Naive thymus-derived CD4-positive, alpha-beta T cell (primary cell): ENCODE measurements at regions of chr12 and their contacts with region 1.

Region 1: GRCh38 chr12:7018350-7019042 is at the start of gene LPCAT3:
- DNase-seq: peak; percentile 93 to 99 (median 98)
- ATAC-seq: peak; percentile 97
- H3K4me3 ChIP-seq: peak within 1 kb of the TSS; percentile 95
- H3K4me3 Mint-ChIP-seq: peak within 1 kb of the TSS; percentile 84 to 100 (median 94)
- H3K27ac ChIP-seq: peak within 1 kb of the TSS; percentile 89
- H3K27ac Mint-ChIP-seq: peak within 1 kb of the TSS; percentile 75 to 96 (median 93)
- H3K4me1 ChIP-seq: peaks cover 11 to 12% of the 10 kb centered on the region in 2 donors
- H3K4me1 Mint-ChIP-seq: peaks cover 25 to 46% (median 41%) of the 10 kb centered on the region in 7 donors
- H3K27me3 ChIP-seq: no peaks in the 10 kb centered on the region
- H3K27me3 Mint-ChIP-seq: no peaks in the 10 kb centered on the region
- total RNA-seq, gene LPCAT3: 16.7 to 37.9 (median 27.1) TPM

Region 2: GRCh38 chr12:6723607-6724396 is 294.7 kb before region 1 on chr12 and contains the start of gene COPS7A:
- CTCF ChIA-PET with region 1: no interaction called
- POLR2A ChIA-PET with region 1: no interaction called
- intact Hi-C with region 1: loop called in 1 of 2 experiments (anchors 2 kb)
- DNase-seq: peak; percentile 77 to 94 (median 90)
- ATAC-seq: peak; percentile 93
- H3K4me3 ChIP-seq: peak within 1 kb of the TSS; percentile 63
- H3K4me3 Mint-ChIP-seq: peak within 1 kb of the TSS; percentile 80 to 97 (median 92)
- H3K27ac ChIP-seq: peak within 1 kb of the TSS; percentile 75
- H3K27ac Mint-ChIP-seq: peak within 1 kb of the TSS; percentile 90 to 98 (median 96)
- H3K4me1 ChIP-seq: peaks cover 10 to 11% of the 10 kb centered on the region in 2 donors
- H3K4me1 Mint-ChIP-seq: peaks cover 24 to 34% (median 27%) of the 10 kb centered on the region in 7 donors
- H3K27me3 ChIP-seq: no peaks in the 10 kb centered on the region
- H3K27me3 Mint-ChIP-seq: no peaks in the 10 kb centered on the region
- total RNA-seq, gene COPS7A: 21.9 to 38.7 (median 30.1) TPM

Region 3: DNA sequence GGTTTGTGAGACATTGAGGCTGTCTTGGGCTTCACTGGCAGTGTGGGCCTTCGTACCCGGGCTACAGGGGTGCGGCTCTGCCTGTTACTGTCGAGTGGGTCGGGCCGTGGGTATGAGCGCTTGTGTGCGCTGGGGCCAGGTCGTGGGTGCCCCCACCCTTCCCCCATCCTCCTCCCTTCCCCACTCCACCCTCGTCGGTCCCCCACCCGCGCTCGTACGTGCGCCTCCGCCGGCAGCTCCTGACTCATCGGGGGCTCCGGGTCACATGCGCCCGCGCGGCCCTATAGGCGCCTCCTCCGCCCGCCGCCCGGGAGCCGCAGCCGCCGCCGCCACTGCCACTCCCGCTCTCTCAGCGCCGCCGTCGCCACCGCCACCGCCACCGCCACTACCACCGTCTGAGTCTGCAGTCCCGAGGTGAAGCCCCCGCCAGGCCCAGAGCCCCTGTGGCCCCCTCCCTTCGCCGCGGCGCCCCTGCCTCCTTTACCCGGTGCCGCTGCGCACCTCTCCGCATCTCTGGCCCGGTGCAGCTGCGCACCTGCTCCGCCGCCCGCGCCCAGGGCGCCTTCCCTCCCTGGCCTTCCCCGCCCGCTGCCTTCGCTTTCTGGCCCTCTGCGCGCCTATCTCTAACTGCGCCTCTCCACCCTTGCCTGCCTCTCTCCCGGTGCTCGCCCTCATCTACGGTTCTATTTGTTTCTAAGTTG is 104.1 kb before region 1 on chr12 and contains the start of gene ENO2:
- CTCF ChIA-PET with region 1: no interaction called
- POLR2A ChIA-PET with region 1: no interaction called
- intact Hi-C with region 1: loop called in 1 of 2 experiments (anchors 2 kb)
- DNase-seq: peak; percentile 68 to 90 (median 81)
- ATAC-seq: peak; percentile 96
- H3K4me3 ChIP-seq: peak within 1 kb of the TSS; percentile 79
- H3K4me3 Mint-ChIP-seq: peak within 1 kb of the TSS; percentile 88 to 100 (median 96)
- H3K27ac ChIP-seq: peak within 1 kb of the TSS; percentile 86
- H3K27ac Mint-ChIP-seq: peak within 1 kb of the TSS; percentile 86 to 99 (median 93)
- H3K4me1 ChIP-seq: peaks cover 11 to 14% of the 10 kb centered on the region in 2 donors
- H3K4me1 Mint-ChIP-seq: peaks cover 0 to 53% (median 36%) of the 10 kb centered on the region in 7 donors
- H3K27me3 ChIP-seq: no peaks in the 10 kb centered on the region
- H3K27me3 Mint-ChIP-seq: peaks cover 0 to 4% (median 0%) of the 10 kb centered on the region in 5 donors
- total RNA-seq, gene ENO2: 65.3 to 193 (median 178) TPM

Region 4: GRCh38 chr12:6944381-6945186 is 73.9 kb before region 1 on chr12:
- CTCF ChIA-PET with region 1: interaction called, 12 read pairs
- POLR2A ChIA-PET with region 1: interaction called, 19 read pairs
- intact Hi-C with region 1: loop called (anchors 1 kb)
- DNase-seq: peak; percentile 70 to 87 (median 84)
- ATAC-seq: peak; percentile 65
- H3K4me3 ChIP-seq: peak overlapping the region; percentile 94
- H3K4me3 Mint-ChIP-seq: peak overlapping the region; percentile 88 to 100 (median 96)
- H3K27ac ChIP-seq: peak overlapping the region; percentile 95
- H3K27ac Mint-ChIP-seq: peak overlapping the region; percentile 95 to 100 (median 98)
- H3K4me1 ChIP-seq: peaks cover 56% of the 10 kb centered on the region in 2 donors
- H3K4me1 Mint-ChIP-seq: peaks cover 42 to 75% (median 60%) of the 10 kb centered on the region in 7 donors
- H3K27me3 ChIP-seq: no peaks in the 10 kb centered on the region
- H3K27me3 Mint-ChIP-seq: no peaks in the 10 kb centered on the region

Region 5: DNA sequence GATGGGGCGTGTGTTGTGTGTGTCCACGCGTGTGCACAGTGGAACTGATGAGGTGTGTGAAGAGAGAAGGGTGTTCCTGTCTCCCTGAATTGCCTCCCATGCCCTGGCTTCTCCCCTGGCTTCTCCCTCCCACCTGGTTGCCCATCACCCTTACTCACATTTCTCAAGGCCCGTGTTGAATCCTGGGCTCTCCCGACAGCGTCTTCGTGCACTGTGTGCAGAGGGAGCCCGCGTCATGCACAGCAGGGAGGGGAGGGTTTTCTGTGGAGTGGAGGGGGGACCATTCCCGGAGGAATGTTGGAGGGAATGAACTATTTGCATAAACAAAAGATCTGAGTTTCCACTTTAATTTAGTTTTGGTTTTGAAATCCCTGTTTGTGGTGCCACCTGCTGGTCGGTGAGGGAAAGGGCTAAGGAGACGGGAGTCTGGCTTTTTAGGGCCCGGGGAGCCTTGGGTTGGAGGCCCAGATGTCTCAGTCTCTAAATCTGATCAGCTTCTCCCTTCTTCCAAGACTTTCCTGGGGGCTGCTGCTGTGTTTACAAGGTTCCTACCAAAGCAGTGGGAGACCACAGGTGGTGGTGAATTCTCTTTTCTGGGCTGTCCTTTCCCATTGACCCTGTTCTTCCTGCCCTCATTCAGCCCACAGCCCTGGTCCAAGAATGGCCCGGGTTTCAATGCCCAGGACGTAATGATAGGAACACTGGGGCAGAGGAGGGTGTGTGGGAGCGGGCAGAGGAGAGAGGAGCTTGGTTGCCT is 73.9 kb after region 1 on chr12 and contains the start of gene C1R:
- CTCF ChIA-PET with region 1: interaction called, 4 read pairs
- POLR2A ChIA-PET with region 1: no interaction called
- intact Hi-C with region 1: loop called (anchors 1 kb)
- DNase-seq: peak; percentile 46 to 71 (median 64)
- ATAC-seq: peak; percentile 81
- H3K4me3 ChIP-seq: peak within 1 kb of the TSS; percentile 66
- H3K4me3 Mint-ChIP-seq: peak within 1 kb of the TSS; percentile 76 to 91 (median 86)
- H3K27ac ChIP-seq: peak within 1 kb of the TSS; percentile 44
- H3K27ac Mint-ChIP-seq: peak within 1 kb of the TSS in 8 of 9 donors; percentile 65 to 94 (median 78)
- H3K4me1 ChIP-seq: peaks cover 7 to 8% of the 10 kb centered on the region in 2 donors
- H3K4me1 Mint-ChIP-seq: peaks cover 0 to 14% (median 9%) of the 10 kb centered on the region in 7 donors
- H3K27me3 ChIP-seq: no peaks in the 10 kb centered on the region
- H3K27me3 Mint-ChIP-seq: no peaks in the 10 kb centered on the region
- total RNA-seq, gene C1R: 1.6 to 7.2 (median 4.8) TPM

Region 6: DNA sequence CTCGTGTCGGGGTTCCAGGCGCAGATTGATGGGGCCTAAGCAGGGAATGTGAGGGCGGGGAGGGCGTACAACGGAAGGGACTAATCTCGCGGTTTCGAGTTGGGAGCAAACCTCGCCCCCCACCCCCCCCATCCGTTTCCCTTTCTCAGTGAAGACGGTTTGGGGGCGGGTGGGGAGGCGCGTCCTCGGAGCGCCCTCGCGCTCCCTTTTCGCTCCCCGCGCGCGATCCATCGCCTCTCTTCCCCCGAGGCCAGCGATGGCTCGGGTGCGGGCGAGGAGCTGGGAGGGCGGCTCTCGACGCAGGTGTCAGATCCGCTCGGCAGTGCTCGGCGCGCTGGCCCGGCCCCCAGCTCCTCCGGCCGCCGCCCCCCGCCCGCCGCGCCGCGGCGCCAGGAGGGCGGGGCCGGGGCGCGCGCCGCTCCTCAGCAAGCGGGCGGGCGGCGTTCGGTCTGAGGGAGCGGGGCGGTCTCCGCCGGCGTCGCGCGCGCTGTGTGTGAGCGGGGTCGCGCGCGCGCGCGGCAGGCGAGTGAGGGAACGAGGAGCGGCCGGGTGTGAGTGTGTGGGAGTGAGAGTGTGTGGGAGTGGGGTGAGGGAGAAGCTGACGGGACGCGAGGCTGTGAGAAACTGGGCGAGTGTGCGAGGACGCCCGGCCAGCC is 1679.1 kb after region 1 on chr12 and contains the start of gene RIMKLB:
- CTCF ChIA-PET with region 1: no interaction called
- POLR2A ChIA-PET with region 1: no interaction called
- intact Hi-C with region 1: loop called in 1 of 2 experiments (anchors 2 kb)
- DNase-seq: peak; percentile 59 to 75 (median 72)
- ATAC-seq: peak; percentile 93
- H3K4me3 ChIP-seq: peak within 1 kb of the TSS; percentile 79
- H3K4me3 Mint-ChIP-seq: peak within 1 kb of the TSS; percentile 89 to 95 (median 93)
- H3K27ac ChIP-seq: peak within 1 kb of the TSS; percentile 79
- H3K27ac Mint-ChIP-seq: peak within 1 kb of the TSS; percentile 65 to 94 (median 90)
- H3K4me1 ChIP-seq: peaks cover 0 to 17% of the 10 kb centered on the region in 2 donors
- H3K4me1 Mint-ChIP-seq: peaks cover 11 to 44% (median 42%) of the 10 kb centered on the region in 7 donors
- H3K27me3 ChIP-seq: no peaks in the 10 kb centered on the region
- H3K27me3 Mint-ChIP-seq: peaks cover 0 to 64% (median 0%) of the 10 kb centered on the region in 5 donors
- total RNA-seq, gene RIMKLB: 1.8 to 31.3 (median 18.2) TPM